Endothelial cell of umbilical vein (primary cell): ENCODE measurements at regions of chr3 and their contacts with region 1.

Region 1: GRCh38 chr3:178263236-178263916 is 272.9 kb upstream of the KCNMB2 start:
- DNase-seq: peak; percentile 88
- H3K4me3 ChIP-seq: no peak overlapping the region
- H3K27ac ChIP-seq: peak overlapping the region; percentile 55
- H3K4me1 ChIP-seq: peaks cover 17% of the 10 kb centered on the region
- H3K27me3 ChIP-seq: no peaks in the 10 kb centered on the region
- CTCF ChIP-seq: no peak
- POLR2A ChIP-seq: no peak

Region 2: DNA sequence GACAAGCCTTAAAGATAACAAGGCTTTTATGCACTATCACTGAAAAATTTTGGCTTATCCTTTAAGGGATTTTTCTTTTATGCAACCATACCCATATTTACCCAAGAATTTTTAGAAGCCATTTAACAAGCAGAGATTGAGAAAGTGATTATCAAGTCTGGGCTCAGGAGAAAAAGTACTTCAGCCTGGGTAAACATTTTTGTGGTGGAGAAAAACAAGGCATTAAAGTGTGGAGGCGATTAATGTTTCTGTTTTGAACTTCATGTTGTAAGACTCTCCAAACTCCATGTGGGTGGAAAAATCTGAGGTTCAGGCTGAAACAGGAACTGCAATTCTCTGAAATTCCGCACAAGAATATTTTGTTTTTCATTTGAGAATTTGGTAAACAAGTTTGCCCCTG is 12.4 kb after region 1 on chr3:
- CTCF ChIA-PET with region 1: interaction called, 6 read pairs
- POLR2A ChIA-PET with region 1: no interaction called
- dilution Hi-C with region 1: no loop called
- intact Hi-C with region 1: loop called (anchors 1 kb)
- DNase-seq: no peak
- H3K4me3 ChIP-seq: no peak overlapping the region
- H3K27ac ChIP-seq: no peak overlapping the region
- H3K4me1 ChIP-seq: peaks cover 15% of the 10 kb centered on the region
- H3K27me3 ChIP-seq: no peaks in the 10 kb centered on the region
- CTCF ChIP-seq: no peak
- POLR2A ChIP-seq: no peak

Region 3: DNA sequence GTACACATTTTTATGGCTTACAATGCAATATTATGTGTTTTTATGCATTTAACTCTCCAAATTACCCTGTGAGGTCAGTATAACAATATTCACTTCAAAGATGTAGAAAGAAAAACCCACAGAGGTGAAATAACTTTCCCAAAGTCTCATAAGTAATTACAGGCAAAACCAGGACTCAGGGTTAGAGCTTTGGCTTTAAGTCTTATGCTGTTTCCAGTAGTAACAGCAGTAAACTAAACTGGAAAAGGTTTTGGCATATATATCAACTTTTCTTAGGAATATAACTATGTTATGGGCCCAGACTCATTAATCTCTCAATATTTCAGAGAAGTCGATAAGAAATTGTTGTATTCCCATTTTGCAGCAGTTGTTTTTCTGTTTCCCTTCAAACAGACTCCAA is 66.6 kb after region 1 on chr3:
- CTCF ChIA-PET with region 1: no interaction called
- POLR2A ChIA-PET with region 1: no interaction called
- dilution Hi-C with region 1: no loop called
- intact Hi-C with region 1: no loop called
- DNase-seq: no peak
- H3K4me3 ChIP-seq: no peak overlapping the region
- H3K27ac ChIP-seq: no peak overlapping the region
- H3K4me1 ChIP-seq: peaks cover 4% of the 10 kb centered on the region
- H3K27me3 ChIP-seq: no peaks in the 10 kb centered on the region
- CTCF ChIP-seq: no peak
- POLR2A ChIP-seq: no peak

Region 4: DNA sequence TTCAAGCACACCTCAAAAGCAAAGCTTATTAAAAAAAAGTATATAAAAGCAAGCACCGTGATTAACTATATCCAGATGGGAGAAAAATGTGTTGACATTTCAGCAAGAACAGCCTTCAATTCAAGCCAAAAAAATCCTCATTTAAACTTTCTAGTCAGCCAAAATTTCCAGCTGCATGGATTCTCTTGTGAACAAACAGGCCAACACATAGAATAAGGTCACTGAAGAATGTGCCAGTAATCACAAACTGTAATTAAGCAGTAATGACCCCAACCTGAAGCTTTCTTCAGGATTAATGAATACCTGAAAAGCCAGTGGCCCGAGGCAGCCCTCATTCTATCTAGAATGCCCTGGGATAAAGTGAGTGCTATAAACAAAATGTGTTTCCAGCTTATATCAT is 142.2 kb after region 1 on chr3:
- CTCF ChIA-PET with region 1: no interaction called
- POLR2A ChIA-PET with region 1: no interaction called
- dilution Hi-C with region 1: no loop called
- intact Hi-C with region 1: no loop called
- DNase-seq: no peak
- H3K4me3 ChIP-seq: no peak overlapping the region
- H3K27ac ChIP-seq: no peak overlapping the region
- H3K4me1 ChIP-seq: no peaks in the 10 kb centered on the region
- H3K27me3 ChIP-seq: no peaks in the 10 kb centered on the region
- CTCF ChIP-seq: no peak
- POLR2A ChIP-seq: no peak